ENCODE measurements at regions of chr10 and their contacts with region 1.

Region 1: GRCh38 chr10:70903262-70903921 is 15.0 kb upstream of the PCBD1 start:
- DNase-seq: no peak
- H3K4me3 ChIP-seq: no peak overlapping the region
- CTCF ChIP-seq: peak; percentile 87

Region 2: GRCh38 chr10:70872291-70872690 is 31.1 kb before region 1 on chr10:
- CTCF ChIA-PET with region 1: no interaction called
- POLR2A ChIA-PET with region 1: no interaction called
- DNase-seq: no peak
- H3K4me3 ChIP-seq: no peak overlapping the region
- CTCF ChIP-seq: no peak

Region 3: GRCh38 chr10:70887804-70888800 is 15.3 kb before region 1 on chr10 and contains the start of gene PCBD1:
- CTCF ChIA-PET with region 1: interaction called, 50 read pairs
- POLR2A ChIA-PET with region 1: no interaction called
- DNase-seq: no peak
- H3K4me3 ChIP-seq: peak within 1 kb of the TSS; percentile 68
- CTCF ChIP-seq: no peak

Region 4: GRCh38 chr10:70956029-70956759 is 52.8 kb after region 1 on chr10:
- CTCF ChIA-PET with region 1: no interaction called
- POLR2A ChIA-PET with region 1: no interaction called
- DNase-seq: no peak
- H3K4me3 ChIP-seq: no peak overlapping the region
- CTCF ChIP-seq: no peak

Region 5: GRCh38 chr10:71205468-71205867 is 302.1 kb after region 1 on chr10:
- CTCF ChIA-PET with region 1: interaction called, 13 read pairs
- POLR2A ChIA-PET with region 1: no interaction called
- DNase-seq: no peak
- H3K4me3 ChIP-seq: no peak overlapping the region
- CTCF ChIP-seq: no peak

Region 6: GRCh38 chr10:71285180-71285545 is 381.8 kb after region 1 on chr10:
- CTCF ChIA-PET with region 1: interaction called, 46 read pairs
- POLR2A ChIA-PET with region 1: no interaction called
- DNase-seq: no peak
- H3K4me3 ChIP-seq: no peak overlapping the region
- CTCF ChIP-seq: peak; percentile 77

Measured in AG04449 (cell line).